K562 (cell line): ENCODE measurements at regions of chr21 and their contacts with region 1.

Region 1: GRCh38 chr21:45554477-45555175 is 12.4 kb upstream of the SLC19A1 start:
- DNase-seq: peak; percentile 88 to 93 (median 92)
- ATAC-seq: peak; percentile 81
- H3K4me3 ChIP-seq: peak overlapping the region; percentile 45
- H3K27ac ChIP-seq: no peak overlapping the region
- H3K4me1 ChIP-seq: peaks cover 16 to 63% of the 10 kb centered on the region in 2 experiments; a peak in 3 of 5 replicates
- H3K27me3 ChIP-seq: peaks cover 20 to 36% of the 10 kb centered on the region in 2 experiments
- CTCF ChIP-seq: peak; percentile 79 to 92 (median 82)
- EP300 ChIP-seq: no peak
- POLR2A ChIP-seq: no peak
- RAD21 ChIP-seq: peak; percentile 56 to 79

Region 2: DNA sequence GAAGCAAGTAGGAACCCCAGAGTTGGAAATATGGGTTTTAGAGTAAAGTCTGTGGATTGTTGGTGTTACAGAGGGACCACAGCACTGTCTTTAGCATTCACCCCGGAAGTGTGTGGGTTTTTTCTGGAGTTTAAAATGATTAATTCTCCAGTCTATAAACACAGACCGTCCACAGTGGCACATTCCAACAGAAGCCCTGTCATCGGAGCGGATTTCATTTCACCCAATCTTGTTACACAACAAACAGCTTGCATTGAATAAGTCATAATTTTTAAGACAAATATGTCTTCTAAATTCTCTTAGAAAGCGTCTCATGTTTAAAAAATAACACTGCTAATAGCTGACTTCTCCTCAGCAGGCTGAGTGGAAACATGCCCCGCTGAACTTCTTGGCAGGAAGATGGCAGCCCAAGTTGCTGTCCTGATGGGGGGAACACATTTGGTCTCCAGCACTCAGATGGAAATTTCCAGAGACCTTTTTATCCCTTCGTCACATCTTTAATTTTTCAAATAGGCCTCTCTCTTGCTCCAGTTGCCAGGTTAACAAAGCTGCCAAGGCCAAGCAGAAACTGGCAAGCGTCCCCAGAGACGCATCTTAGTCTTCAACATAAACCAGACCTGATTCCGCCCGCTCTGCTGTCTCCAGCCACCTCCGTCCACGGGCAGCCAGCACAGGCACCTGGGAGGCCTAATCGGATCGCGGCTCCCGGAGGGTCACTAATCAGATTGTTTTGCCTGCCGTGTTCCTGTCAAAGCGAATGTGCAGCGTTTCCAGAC is 16.4 kb after region 1 on chr21:
- CTCF ChIA-PET with region 1: no interaction called
- POLR2A ChIA-PET with region 1: interaction called, 12 read pairs
- in situ Hi-C with region 1: no loop called
- intact Hi-C with region 1: no loop called
- DNase-seq: no peak
- ATAC-seq: no peak
- H3K4me3 ChIP-seq: no peak overlapping the region
- H3K27ac ChIP-seq: no peak overlapping the region
- H3K4me1 ChIP-seq: peaks cover 0 to 17% of the 10 kb centered on the region in 2 experiments; a peak in 2 of 5 replicates
- H3K27me3 ChIP-seq: peaks cover 76 to 77% of the 10 kb centered on the region in 2 experiments
- CTCF ChIP-seq: no peak
- EP300 ChIP-seq: no peak
- POLR2A ChIP-seq: no peak
- RAD21 ChIP-seq: no peak

Region 3: GRCh38 chr21:45590246-45590725 is 35.7 kb after region 1 on chr21:
- CTCF ChIA-PET with region 1: interaction called, 14 read pairs
- POLR2A ChIA-PET with region 1: interaction called, 4 read pairs
- in situ Hi-C with region 1: loop called (anchors 5 kb)
- intact Hi-C with region 1: no loop called
- DNase-seq: peak; percentile 76 to 97 (median 97)
- ATAC-seq: peak; percentile 84
- H3K4me3 ChIP-seq: peak overlapping the region; percentile 53
- H3K27ac ChIP-seq: no peak overlapping the region
- H3K4me1 ChIP-seq: peaks cover 23 to 42% of the 10 kb centered on the region in 2 experiments
- H3K27me3 ChIP-seq: peaks cover 0 to 4% of the 10 kb centered on the region in 2 experiments; a peak in 2 of 5 replicates
- CTCF ChIP-seq: no peak
- EP300 ChIP-seq: no peak
- POLR2A ChIP-seq: no peak
- RAD21 ChIP-seq: no peak

Region 4: GRCh38 chr21:45596704-45597318 is 42.2 kb after region 1 on chr21:
- CTCF ChIA-PET with region 1: interaction called, 33 read pairs
- POLR2A ChIA-PET with region 1: no interaction called
- in situ Hi-C with region 1: loop called (anchors 5 kb)
- intact Hi-C with region 1: loop called (anchors 1 kb)
- DNase-seq: peak; percentile 86 to 88 (median 87)
- ATAC-seq: peak; percentile 85
- H3K4me3 ChIP-seq: no peak overlapping the region
- H3K27ac ChIP-seq: no peak overlapping the region
- H3K4me1 ChIP-seq: peaks cover 15 to 44% of the 10 kb centered on the region in 2 experiments
- H3K27me3 ChIP-seq: no peaks in the 10 kb centered on the region; a peak in 1 of 5 replicates
- CTCF ChIP-seq: peak; percentile 94 to 99 (median 95)
- EP300 ChIP-seq: no peak
- POLR2A ChIP-seq: no peak
- RAD21 ChIP-seq: peak; percentile 18 to 80; a peak in 2 of 4 replicates

Region 5: DNA sequence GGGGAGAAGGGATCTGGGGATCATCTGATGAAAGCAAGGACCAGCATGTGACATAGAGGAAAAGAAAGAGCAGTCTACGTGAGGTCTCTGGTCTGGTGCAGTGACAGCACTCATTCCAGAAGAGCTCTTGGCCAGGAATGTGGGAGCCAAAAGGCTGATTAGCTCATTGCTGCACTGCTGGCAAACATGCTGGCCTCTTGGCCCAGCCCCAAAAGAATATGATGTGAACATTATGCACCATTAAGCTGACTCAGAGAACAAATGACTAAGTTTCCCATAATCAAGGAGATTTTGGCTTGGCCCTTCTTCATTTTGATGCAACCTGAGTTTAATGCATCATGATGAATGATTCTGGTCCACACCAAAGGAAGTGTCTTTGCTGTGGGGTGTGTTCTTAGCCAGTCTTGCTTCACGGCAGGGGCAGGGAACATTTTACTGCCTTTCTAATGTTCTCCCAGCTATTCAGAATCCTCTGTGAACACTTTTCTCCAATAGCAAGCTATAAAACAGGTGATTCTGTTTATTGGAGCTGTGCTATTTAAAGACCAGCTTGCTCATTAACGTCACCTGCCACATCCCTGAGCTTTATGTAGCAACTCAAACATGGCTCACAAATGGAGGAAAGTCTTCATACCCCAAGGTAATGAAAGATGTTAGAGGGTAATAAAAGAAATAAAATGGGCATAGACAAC is 144.0 kb after region 1 on chr21:
- CTCF ChIA-PET with region 1: no interaction called
- POLR2A ChIA-PET with region 1: no interaction called
- in situ Hi-C with region 1: no loop called
- intact Hi-C with region 1: no loop called
- DNase-seq: no peak
- ATAC-seq: no peak
- H3K4me3 ChIP-seq: no peak overlapping the region
- H3K27ac ChIP-seq: no peak overlapping the region
- H3K4me1 ChIP-seq: no peaks in the 10 kb centered on the region
- H3K27me3 ChIP-seq: peaks cover 3% of the 10 kb centered on the region in 2 experiments; a peak in 3 of 5 replicates
- CTCF ChIP-seq: no peak
- EP300 ChIP-seq: no peak
- POLR2A ChIP-seq: no peak
- RAD21 ChIP-seq: no peak

Region 6: GRCh38 chr21:45820171-45821091 is 265.8 kb after region 1 on chr21:
- CTCF ChIA-PET with region 1: interaction called, 21 read pairs
- POLR2A ChIA-PET with region 1: interaction called, 3 read pairs
- in situ Hi-C with region 1: loop called (anchors 5 kb)
- intact Hi-C with region 1: loop called (anchors 1 kb)
- DNase-seq: peak; percentile 91 to 96 (median 95)
- ATAC-seq: peak; percentile 96
- H3K4me3 ChIP-seq: no peak overlapping the region
- H3K27ac ChIP-seq: no peak overlapping the region
- H3K4me1 ChIP-seq: peaks cover 0 to 7% of the 10 kb centered on the region in 2 experiments; a peak in 2 of 5 replicates
- H3K27me3 ChIP-seq: peaks cover 29 to 67% of the 10 kb centered on the region in 2 experiments
- CTCF ChIP-seq: peak; percentile 94 to 98 (median 95)
- EP300 ChIP-seq: no peak
- POLR2A ChIP-seq: no peak
- RAD21 ChIP-seq: peak; percentile 84 to 95